ENCODE measurements at regions of chr1 and their contacts with region 1.

Region 1: GRCh38 chr1:107486349-107486748 is 345.5 kb downstream of the NTNG1 start:
- DNase-seq: no peak
- ATAC-seq: no peak
- H3K4me3 Mint-ChIP-seq: no peak overlapping the region
- H3K27ac Mint-ChIP-seq: no peak overlapping the region
- H3K4me1 Mint-ChIP-seq: no peaks in the 10 kb centered on the region
- H3K27me3 Mint-ChIP-seq: no peaks in the 10 kb centered on the region
- CTCF ChIP-seq: no peak

Region 2: GRCh38 chr1:108889706-108890384 is 1403.5 kb after region 1 on chr1:
- CTCF ChIA-PET with region 1: no interaction called
- POLR2A ChIA-PET with region 1: no interaction called
- intact Hi-C with region 1: loop called (anchors 5 kb)
- DNase-seq: no peak
- ATAC-seq: no peak
- H3K4me3 Mint-ChIP-seq: no peak overlapping the region
- H3K27ac Mint-ChIP-seq: no peak overlapping the region
- H3K4me1 Mint-ChIP-seq: no peaks in the 10 kb centered on the region
- H3K27me3 Mint-ChIP-seq: no peaks in the 10 kb centered on the region
- CTCF ChIP-seq: no peak